RWPE1 (cell line): ENCODE measurements at regions of chr1 and their contacts with region 1.

Region 1: DNA sequence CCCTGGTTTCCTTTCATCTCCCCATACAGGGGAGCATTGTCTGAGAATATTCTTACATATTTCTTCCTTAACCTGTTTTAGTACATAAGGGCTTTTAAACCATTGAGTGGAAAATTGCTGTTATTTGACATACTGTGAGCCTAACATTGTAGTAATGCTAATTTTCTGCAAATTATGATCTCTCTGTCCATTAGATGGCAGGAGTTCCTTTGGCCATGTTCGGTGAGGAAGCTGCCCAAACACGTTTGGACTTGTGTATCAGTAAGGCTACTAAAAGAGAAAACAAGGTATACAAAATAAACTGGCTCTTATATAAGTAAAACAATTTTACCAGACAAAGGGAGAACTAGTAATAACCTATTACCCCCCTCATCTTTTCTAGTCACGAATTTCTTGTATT is 29.2 kb downstream of the CDC7 start:
- DNase-seq: peak; percentile 37
- H3K27ac ChIP-seq: no peak overlapping the region
- CTCF ChIP-seq: peak; percentile 83

Region 2: GRCh38 chr1:91383456-91383855 is 146.4 kb before region 1 on chr1:
- CTCF ChIA-PET with region 1: no interaction called
- POLR2A ChIA-PET with region 1: no interaction called
- DNase-seq: no peak
- H3K27ac ChIP-seq: no peak overlapping the region
- CTCF ChIP-seq: no peak

Region 3: DNA sequence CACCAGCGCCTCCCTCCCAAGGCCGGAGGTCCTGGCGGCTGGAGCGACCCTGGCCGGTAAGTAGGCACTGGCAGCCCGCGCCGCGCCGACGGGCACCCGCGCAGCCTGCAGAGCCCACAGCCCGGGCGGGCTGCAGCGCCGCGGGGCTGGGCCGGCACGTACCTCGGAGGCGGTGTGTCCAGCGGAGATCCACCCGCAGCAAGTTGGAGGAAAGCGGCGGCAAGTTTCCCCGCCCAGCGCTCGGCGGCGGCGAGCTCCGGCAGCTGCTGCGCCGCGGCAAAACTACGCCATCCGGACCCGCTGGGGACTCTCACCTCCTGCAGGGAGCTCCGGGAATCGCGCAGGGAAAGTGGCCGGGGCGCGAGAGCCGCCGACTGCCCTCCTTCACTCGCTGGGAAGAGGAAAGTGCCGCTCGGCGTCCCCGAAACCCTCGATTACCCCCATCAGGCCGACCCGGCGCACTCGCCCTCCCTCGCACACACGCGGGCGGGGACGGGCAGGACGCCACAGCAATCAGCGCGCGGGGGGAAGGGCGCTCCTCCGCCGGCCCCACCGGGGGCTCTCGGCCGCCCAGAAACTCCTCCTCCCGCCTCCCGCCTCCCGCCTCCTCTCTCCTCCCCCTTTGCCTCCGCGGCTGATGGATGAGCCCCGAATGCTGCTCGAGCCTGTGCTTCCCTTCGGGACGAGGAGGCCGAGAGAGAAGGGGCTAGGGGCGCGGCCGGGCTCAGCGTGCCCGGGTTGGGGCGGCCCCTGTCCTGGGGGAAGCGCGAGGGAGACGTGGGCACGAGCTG is 356.1 kb after region 1 on chr1 and contains the start of gene TGFBR3:
- CTCF ChIA-PET with region 1: interaction called, 13 read pairs
- POLR2A ChIA-PET with region 1: no interaction called
- DNase-seq: peak; percentile 81
- H3K27ac ChIP-seq: peak within 1 kb of the TSS; percentile 95
- CTCF ChIP-seq: peak; percentile 67